AG04449 (cell line): ENCODE measurements at regions of chr17 and their contacts with region 1.

Region 1: DNA sequence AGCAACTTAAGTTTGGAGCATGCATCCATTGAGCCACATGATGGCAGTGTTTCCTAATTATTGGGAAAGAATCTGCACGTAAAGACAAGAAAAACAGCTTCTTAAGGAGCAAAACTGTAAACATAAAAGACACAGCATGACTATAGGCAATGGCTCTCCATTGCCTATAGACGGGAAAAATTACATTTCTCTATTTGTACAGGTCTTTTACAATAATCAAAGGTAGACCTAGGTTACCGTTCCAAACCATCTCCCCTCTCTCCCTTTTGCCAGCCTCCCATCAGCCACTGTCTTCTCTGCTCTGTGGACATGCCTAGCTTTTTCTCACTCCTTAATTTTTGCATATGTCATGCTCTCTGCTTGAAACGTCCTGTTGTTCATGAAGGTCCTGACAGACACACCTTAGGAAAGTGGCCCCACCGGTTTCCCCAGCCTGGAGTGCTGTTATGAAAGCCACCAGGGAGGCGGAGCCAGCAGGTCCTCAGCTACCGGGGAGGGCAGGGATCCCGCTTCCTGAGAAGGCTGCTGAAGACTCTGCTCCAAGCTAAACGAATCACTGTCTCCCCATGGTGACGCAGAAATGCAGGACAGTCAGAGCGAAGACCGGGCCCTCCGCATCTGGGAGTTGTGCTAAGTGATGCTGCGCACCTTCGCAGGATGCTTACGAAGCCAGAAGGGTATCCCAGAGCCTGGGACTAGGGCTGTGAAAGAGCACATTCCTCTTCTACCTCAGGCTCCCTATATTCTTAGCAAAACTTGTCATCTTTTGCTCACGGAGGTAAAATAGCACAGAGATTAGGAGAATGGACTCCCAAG is 2.2 kb upstream of the SLC16A11 start:
- DNase-seq: peak; percentile 44
- H3K4me3 ChIP-seq: no peak overlapping the region
- CTCF ChIP-seq: peak; percentile 51

Region 2: DNA sequence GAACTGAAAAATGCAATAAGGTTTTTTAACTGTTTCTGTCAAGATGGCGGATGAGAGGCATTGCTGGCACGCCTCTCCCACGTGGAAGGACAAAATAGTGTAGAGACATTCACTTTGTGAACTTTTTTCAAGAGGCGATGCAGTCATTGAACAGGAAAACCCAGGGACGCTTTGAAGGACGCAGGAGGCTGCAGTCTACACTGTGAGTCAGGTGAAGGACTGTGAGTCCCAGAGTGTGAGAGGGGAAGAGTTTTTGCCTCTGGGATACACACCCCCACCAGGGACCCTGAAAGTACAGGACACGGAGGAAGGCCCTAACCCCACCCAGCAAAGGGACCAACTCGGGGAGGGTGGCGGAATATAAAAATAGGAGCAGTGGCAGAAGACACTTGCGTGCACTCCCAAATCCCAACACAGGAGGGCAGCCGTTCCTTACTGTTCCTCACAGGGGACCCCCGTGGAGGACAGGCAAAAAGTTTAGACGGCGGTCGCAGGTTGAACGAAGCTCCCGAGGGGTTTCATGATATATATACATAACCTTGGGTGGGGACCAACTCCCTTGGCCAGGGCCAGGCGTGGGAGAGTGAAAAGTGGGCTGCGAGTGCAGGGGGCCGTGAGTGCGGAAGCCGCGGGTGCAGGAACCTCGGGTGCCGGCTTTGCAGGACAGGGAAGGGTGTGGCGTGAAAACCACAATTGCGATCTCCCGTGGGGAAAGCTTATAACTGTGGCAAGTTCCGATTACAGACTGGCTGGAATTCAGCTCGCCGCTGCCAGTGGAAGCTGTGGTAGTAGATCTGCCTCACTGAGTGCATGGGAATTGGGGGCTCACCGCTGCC is 132.3 kb before region 1 on chr17:
- CTCF ChIA-PET with region 1: interaction called, 10 read pairs
- POLR2A ChIA-PET with region 1: no interaction called
- DNase-seq: no peak
- H3K4me3 ChIP-seq: no peak overlapping the region
- CTCF ChIP-seq: peak; percentile 82

Region 3: GRCh38 chr17:7035591-7036368 is 10.3 kb before region 1 on chr17 and contains the start of gene SLC16A13:
- CTCF ChIA-PET with region 1: interaction called, 22 read pairs
- POLR2A ChIA-PET with region 1: interaction called, 5 read pairs
- DNase-seq: peak; percentile 66
- H3K4me3 ChIP-seq: peak within 1 kb of the TSS; percentile 80
- CTCF ChIP-seq: no peak

Region 4: DNA sequence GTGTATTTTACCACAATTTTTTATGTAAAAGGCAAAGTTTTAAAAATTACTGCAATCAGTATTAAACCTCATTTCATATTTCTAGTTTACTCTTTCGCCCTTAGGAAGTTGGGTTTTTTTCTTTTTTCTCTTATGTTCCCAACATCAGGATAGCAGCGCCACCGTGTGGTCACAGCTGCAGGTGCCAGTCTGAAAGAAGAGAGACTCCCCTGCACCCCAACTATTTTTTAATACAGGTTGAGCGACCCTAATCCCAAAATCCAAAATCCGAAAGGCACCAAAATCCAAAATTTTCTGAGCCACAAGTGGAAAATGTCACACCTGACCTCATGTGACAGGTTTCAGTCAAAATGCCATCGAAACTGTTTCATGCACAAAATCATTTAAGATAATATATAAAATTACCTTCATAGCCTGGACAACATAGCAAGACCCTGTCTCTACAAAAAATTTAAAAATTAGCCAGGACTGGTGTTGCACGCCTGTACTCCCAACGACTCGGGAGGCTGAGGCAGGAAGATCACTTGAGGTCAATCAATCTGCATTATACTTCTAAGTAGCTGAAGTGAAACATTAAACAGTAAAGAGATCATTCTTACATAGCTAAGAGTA is 90.3 kb after region 1 on chr17:
- CTCF ChIA-PET with region 1: interaction called, 465 read pairs
- POLR2A ChIA-PET with region 1: no interaction called
- DNase-seq: peak; percentile 4
- H3K4me3 ChIP-seq: no peak overlapping the region
- CTCF ChIP-seq: peak; percentile 72

Region 5: DNA sequence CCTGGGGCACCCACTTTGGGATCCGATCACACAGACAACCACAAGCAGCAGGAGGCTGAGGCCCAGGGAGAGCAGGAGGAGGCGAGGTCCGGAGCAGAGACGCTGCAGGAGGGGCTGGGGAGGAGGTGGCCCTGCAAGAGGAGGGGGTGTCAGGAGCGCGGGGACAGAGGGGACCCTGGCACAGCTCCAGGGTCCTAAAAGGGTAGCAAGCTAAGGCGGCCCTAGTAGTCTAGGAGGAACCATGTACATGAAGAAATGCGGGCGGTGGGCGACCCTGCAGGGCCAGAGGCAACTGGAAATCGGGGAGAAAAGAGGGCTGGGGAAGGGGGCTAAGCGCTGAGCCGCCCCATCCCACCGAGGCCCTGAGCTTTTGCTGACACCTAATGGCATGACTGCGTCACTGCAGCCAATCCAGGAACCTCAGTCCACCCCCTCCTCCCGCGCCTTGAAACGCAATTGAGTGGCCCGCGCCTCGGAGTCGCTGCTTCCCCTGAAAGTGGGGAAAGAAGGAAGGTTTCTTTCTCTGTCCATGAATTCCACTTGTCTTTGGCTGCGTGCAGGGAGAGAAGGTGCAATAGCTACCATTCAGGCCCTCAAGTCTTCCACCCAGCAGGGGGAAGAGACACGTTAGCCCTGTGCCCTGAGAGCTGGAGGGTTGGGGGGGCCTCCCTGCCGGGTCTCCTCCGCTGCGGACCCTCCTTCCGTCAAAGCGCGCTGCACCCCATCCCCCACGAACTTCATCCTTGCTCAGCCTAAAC is 131.3 kb after region 1 on chr17:
- CTCF ChIA-PET with region 1: interaction called, 156 read pairs
- POLR2A ChIA-PET with region 1: no interaction called
- DNase-seq: no peak
- H3K4me3 ChIP-seq: peak overlapping the region; percentile 60
- CTCF ChIP-seq: peak; percentile 86

Region 6: DNA sequence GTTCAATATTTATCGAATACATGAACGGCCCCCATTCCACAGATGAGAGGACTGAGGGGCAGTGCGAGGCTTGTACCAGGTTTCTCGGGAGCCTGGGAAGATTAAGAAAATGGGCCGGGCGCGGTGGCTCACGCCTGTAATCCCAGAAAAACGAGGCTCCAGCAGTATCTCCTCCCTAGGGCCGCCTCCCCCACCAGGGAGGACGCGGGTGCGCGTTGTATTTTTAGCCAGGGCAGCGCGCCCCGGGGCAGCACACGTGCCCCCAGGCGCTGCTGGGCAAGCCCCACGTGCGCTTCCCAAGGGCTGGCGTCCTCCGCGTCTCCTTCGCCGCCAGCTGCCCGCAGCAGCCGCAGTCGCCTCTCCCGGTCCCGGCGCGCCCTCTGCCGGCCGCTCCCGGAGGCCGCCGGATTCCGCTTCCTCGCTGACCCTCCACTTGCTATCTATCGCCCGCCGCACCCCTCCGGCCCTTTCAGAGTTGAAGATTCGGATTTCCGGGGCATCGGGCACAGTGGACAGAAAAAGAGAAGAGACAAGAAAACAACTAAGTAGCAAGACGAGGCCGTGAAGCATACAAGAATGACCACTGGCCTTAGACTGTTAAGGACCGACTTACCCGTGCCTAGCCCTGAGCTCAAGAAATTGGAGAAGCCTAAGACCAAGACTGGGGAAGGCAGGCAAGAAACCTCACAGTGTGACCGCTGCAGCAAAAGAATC is 250.2 kb after region 1 on chr17:
- CTCF ChIA-PET with region 1: interaction called, 81 read pairs
- POLR2A ChIA-PET with region 1: no interaction called
- DNase-seq: no peak
- H3K4me3 ChIP-seq: peak overlapping the region; percentile 20
- CTCF ChIP-seq: peak; percentile 89

Region 7: GRCh38 chr17:7589204-7589868 is 543.2 kb after region 1 on chr17:
- CTCF ChIA-PET with region 1: interaction called, 12 read pairs
- POLR2A ChIA-PET with region 1: no interaction called
- DNase-seq: no peak
- H3K4me3 ChIP-seq: peak overlapping the region; percentile 6; the same call in 1 of the 2 replicates
- CTCF ChIP-seq: peak; percentile 89